ENCODE measurements at regions of chr20 and their contacts with region 1.

Region 1: DNA sequence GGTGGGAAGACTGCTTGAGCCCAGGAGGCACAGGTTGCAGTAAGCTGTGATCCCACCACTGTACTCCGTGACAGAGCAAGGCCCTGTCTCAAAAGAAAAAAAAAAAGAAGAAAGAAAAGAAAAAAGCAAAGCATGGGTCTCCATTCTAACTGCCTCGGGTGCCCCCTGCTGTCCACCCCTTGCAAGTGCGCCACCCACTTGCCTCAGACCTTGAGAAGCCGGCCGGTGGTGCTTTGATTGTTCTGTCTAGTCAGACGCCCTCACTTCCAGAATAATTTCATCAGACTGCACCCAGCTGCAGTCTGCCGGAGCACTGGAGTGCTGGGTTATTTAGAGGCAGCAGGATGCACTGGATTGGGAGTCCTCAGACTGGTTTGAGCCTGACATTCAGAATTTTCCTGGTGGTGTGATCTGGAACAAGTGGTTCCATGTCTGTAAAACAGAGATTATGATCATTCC is 17.6 kb upstream of the TM9SF4 start:
- DNase-seq: peak; percentile 77
- H3K4me3 Mint-ChIP-seq: no peak overlapping the region
- H3K27ac Mint-ChIP-seq: no peak overlapping the region
- H3K4me1 Mint-ChIP-seq: no peaks in the 10 kb centered on the region
- H3K27me3 Mint-ChIP-seq: peaks cover 40% of the 10 kb centered on the region
- CTCF ChIP-seq: peak; percentile 97

Region 2: DNA sequence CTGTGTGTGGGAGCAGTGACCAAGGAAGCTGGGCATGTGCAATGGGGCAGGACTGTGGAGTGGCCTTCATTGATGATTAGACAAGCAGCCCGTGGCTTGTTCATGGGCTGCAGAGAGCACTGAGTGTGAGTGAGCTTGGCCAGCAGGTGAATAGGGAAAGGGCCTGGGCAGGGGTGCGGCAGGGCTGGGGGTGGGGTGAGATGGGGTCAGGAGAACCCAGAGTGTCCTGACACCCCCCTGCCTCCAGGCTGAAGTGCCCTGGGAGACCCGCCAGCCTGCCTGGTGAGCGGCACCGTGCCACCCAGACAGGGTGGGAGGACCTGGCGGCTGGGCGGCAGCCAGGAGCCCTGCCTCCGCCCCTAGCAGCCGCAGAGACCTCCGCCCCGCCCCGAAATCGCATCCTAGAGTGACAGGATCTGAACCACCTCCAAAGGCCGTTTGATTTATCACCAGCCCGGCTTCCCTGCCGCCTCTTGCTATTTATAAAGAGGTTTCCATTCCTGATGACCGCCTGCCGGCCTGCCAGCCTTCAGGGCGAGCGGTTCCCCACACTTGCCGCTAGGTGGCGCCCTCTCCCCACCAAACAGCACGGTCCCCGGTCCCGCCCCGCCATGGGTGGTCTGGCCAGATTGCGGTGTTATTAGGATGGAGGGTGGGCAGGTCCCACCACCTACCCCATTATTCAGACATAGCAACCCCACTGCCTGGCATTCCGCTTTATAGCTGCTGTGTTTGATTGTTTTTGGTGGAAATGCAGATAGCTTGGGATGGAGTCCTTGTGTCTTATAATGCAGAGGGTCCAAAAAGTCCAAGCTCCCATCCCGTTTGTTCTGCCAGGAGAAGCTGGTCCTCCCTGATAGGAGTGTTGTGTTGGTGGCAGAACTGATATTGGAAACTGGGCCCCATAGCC is 269.2 kb before region 1 on chr20:
- CTCF ChIA-PET with region 1: interaction called, 67 read pairs
- POLR2A ChIA-PET with region 1: no interaction called
- intact Hi-C with region 1: loop called (anchors 1 kb)
- DNase-seq: peak; percentile 70
- H3K4me3 Mint-ChIP-seq: no peak overlapping the region
- H3K27ac Mint-ChIP-seq: no peak overlapping the region
- H3K4me1 Mint-ChIP-seq: no peaks in the 10 kb centered on the region
- H3K27me3 Mint-ChIP-seq: no peaks in the 10 kb centered on the region
- CTCF ChIP-seq: peak; percentile 99

Region 3: GRCh38 chr20:32040142-32041022 is 51.5 kb before region 1 on chr20:
- CTCF ChIA-PET with region 1: interaction called, 15 read pairs
- POLR2A ChIA-PET with region 1: no interaction called
- intact Hi-C with region 1: loop called (anchors 2 kb)
- DNase-seq: no peak
- H3K4me3 Mint-ChIP-seq: no peak overlapping the region
- H3K27ac Mint-ChIP-seq: no peak overlapping the region
- H3K4me1 Mint-ChIP-seq: peaks cover 15% of the 10 kb centered on the region
- H3K27me3 Mint-ChIP-seq: peaks cover 74% of the 10 kb centered on the region
- CTCF ChIP-seq: no peak

Region 4: DNA sequence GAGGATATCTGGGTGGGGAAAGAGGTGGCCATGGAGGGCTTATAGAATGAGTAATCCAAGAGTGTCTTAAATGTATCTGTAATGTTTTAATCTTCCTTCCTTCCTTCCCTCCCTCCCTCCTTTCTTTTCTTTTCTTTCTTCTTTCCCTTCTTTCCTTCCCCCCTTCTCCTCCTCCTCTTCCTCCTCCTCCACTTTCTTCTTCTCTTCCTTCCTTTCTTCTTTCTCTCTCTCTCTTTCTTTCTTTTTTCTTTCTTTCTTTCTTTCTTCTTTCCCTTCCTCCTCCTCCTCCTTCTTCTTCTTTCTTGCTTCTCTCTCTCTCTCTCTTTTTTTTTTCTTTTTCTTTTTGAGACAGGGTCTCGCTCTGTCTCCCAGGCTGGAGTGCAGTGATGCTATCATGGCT is 32.7 kb before region 1 on chr20:
- CTCF ChIA-PET with region 1: interaction called, 21 read pairs
- POLR2A ChIA-PET with region 1: no interaction called
- intact Hi-C with region 1: no loop called
- DNase-seq: no peak
- H3K4me3 Mint-ChIP-seq: no peak overlapping the region
- H3K27ac Mint-ChIP-seq: no peak overlapping the region
- H3K4me1 Mint-ChIP-seq: no peaks in the 10 kb centered on the region
- H3K27me3 Mint-ChIP-seq: peaks cover 72% of the 10 kb centered on the region
- CTCF ChIP-seq: no peak

Region 5: DNA sequence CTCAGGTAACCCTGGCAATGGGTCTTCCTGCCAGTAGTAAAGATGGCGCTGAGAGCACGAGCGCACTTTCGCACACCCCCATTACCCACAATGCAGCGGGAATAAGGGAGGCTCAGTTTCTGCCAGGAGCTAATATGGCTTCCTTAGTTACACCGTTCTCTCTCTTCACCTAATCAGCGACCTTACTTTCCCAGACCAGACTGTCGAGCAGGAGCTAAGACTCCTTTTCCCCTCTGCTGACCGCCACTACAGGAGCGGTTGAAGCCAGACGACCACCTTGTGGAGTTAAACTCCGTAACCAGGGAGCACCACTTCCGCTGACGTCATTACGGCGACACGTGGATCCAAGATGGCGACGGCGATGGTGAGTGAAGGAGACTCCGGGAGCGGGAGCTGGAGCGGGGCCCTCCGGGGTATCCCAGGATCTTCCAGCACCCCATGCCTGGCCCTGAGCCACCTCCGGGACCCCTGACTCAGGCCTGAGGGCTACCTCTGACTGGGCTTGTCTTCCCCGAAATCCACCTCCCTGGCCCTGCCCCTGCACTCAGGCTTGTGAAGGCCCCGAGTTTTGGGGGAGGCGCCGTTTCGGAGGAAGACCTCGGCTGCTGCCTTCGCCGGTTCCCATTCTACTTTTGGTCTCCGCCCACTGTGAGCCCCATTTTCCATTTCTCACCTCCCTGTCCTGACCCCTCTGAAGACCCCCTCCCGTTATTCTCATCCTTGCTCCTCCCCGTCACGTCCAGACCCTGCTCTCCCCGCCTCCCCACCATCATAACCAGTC is 17.7 kb after region 1 on chr20 and contains the start of gene TM9SF4:
- CTCF ChIA-PET with region 1: interaction called, 57 read pairs
- POLR2A ChIA-PET with region 1: interaction called, 4 read pairs
- intact Hi-C with region 1: no loop called
- DNase-seq: peak; percentile 96
- H3K4me3 Mint-ChIP-seq: peak within 1 kb of the TSS; percentile 76
- H3K27ac Mint-ChIP-seq: peak within 1 kb of the TSS; percentile 99
- H3K4me1 Mint-ChIP-seq: peaks cover 28% of the 10 kb centered on the region
- H3K27me3 Mint-ChIP-seq: peaks cover 4% of the 10 kb centered on the region
- CTCF ChIP-seq: no peak
- total RNA-seq, gene TM9SF4: 50.6 and 52.3 TPM in 2 replicates

Region 6: DNA sequence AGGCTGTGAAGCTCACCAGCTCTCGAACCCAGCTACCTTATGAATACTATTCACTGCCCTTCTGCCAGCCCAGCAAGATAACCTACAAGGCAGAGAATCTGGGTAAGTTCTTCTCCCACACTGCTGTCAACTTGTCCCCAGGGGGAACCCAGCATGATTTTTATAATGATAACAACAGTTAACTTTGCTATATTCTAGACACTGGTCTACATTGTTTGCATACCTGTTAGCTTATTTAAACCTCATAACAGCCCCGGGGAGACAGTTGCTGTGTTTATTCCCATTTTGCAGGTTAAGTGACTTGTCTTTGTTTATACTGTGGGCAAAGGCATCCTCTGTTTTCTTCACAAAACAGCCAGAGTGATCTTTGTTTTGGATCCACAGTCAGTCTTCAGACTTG is 44.2 kb after region 1 on chr20:
- CTCF ChIA-PET with region 1: interaction called, 17 read pairs
- POLR2A ChIA-PET with region 1: no interaction called
- intact Hi-C with region 1: no loop called
- DNase-seq: no peak
- H3K4me3 Mint-ChIP-seq: no peak overlapping the region
- H3K27ac Mint-ChIP-seq: no peak overlapping the region
- H3K4me1 Mint-ChIP-seq: peaks cover 5% of the 10 kb centered on the region
- H3K27me3 Mint-ChIP-seq: no peaks in the 10 kb centered on the region
- CTCF ChIP-seq: no peak